Heart left ventricle (tissue), 16 donors: ENCODE measurements at regions of chr12 and their contacts with region 1.

Region 1: DNA sequence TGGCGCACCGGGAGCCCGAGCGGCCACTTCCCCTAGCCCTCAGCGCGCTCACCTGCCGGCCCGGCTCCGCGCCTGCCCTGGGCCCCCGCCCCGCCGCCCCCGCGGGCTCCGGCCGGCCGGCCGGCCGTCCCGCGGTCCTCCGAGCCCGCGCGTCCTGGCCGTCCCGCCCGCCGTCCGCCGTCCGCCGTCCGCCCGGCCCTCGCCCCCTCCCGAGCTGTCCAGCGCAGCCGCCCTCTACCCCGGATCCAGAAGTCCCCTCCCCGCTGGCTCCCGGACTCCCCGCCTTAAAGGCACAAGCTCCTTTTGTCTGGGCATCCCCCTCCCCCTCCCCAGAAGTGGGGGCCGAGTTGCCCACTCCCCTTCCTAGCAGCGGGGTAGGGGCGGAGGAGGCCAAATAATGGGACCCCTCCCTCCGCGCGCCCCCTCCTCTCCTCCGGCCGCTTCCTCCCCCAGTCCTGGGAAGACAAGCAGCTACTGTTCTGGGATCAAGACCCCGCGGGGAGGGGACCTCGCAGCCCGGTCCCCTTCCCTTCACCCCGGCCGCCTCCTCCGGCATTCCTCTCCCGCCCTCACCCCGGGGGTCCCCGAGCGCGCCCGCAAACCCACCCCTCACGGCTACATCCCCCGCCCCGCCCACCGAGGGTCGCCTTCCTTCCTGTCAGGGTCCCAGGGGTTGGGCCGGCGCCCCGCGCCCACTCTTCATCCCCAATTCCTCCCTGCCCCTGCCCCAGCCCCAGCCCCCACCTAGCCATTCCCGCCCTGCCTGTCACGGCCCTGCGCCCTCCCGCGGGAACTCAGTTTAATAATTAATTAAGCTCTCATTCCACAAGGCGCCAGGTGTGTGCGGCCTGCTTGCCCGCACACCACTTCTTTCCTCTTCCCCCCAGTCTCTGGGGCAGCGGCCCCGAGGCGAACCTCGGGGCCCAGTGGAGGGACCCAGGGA is at the start of gene ADCY6:
- DNase-seq: peak; percentile 88 to 92 (median 89)
- ATAC-seq: peak in 3 of 4 donors; percentile 66 to 67 (median 66)
- H3K4me3 ChIP-seq: peak within 1 kb of the TSS; percentile 72 to 100 (median 98)
- H3K27ac ChIP-seq: peak within 1 kb of the TSS; percentile 89 to 99 (median 94)
- H3K4me1 ChIP-seq: peaks cover 3 to 48% (median 34%) of the 10 kb centered on the region in 12 donors
- H3K27me3 ChIP-seq: peaks cover 0 to 14% (median 0%) of the 10 kb centered on the region in 9 donors
- CTCF ChIP-seq: peak in 1 of 12 donors; percentile 8
- POLR2A ChIP-seq: peak in 1 of 2 donors; percentile 46
- total RNA-seq, gene ADCY6: 88.4 to 145 (median 106) TPM

Region 2: DNA sequence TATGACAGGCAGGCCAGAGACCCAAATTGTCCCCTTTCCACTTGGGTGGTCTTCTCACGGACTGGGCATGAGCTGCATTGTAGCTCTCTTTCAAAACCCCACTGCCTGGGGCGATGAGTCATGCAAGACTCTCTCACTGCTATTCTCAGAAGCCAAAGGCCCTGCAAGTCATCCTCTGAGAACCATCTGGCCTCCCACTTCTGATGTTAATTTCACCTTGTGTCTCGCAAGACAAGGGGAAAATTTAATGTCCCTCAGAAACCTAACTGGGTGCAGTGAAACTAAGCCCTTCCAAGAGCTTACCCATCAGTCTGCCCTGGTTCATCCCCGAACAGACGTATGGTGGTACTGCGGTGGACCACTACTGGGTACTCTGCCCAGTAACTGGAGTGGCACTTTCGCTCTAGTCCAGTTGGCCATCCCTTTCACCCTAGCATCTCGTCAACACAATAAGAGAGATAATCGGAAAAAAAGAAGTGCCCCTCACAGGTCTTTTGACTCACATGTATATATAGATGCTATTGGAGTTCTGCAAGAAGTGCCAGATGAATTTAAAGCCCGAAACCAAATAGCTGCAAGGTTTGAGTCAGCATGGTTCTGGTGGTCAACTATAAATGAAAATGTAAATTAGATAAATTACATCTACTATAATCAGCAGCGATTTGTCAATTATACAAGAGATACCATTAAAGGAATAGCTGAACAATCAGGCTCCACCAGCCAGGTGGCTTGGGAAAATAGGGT is 187.9 kb before region 1 on chr12:
- intact Hi-C with region 1: no loop called
- DNase-seq: no peak
- ATAC-seq: no peak
- H3K4me3 ChIP-seq: no peak overlapping the region
- H3K27ac ChIP-seq: no peak overlapping the region
- H3K4me1 ChIP-seq: no peaks in the 10 kb centered on the region
- H3K27me3 ChIP-seq: peaks cover 0 to 5% (median 0%) of the 10 kb centered on the region in 9 donors
- CTCF ChIP-seq: no peak
- POLR2A ChIP-seq: no peak

Region 3: GRCh38 chr12:48681738-48682532 is 107.2 kb before region 1 on chr12 and contains the start of gene KANSL2:
- intact Hi-C with region 1: loop called in 1 of 10 experiments (anchors 5 kb)
- DNase-seq: peak; percentile 98 to 99 (median 99)
- ATAC-seq: peak; percentile 98 to 100 (median 99)
- H3K4me3 ChIP-seq: peak within 1 kb of the TSS; percentile 77 to 99 (median 92)
- H3K27ac ChIP-seq: peak within 1 kb of the TSS; percentile 83 to 99 (median 95)
- H3K4me1 ChIP-seq: peaks cover 6 to 51% (median 42%) of the 10 kb centered on the region in 12 donors
- H3K27me3 ChIP-seq: no peaks in the 10 kb centered on the region
- CTCF ChIP-seq: no peak
- POLR2A ChIP-seq: peak; percentile 93 to 99
- total RNA-seq, gene KANSL2: 20.1 to 34.4 (median 24.0) TPM

Region 4: DNA sequence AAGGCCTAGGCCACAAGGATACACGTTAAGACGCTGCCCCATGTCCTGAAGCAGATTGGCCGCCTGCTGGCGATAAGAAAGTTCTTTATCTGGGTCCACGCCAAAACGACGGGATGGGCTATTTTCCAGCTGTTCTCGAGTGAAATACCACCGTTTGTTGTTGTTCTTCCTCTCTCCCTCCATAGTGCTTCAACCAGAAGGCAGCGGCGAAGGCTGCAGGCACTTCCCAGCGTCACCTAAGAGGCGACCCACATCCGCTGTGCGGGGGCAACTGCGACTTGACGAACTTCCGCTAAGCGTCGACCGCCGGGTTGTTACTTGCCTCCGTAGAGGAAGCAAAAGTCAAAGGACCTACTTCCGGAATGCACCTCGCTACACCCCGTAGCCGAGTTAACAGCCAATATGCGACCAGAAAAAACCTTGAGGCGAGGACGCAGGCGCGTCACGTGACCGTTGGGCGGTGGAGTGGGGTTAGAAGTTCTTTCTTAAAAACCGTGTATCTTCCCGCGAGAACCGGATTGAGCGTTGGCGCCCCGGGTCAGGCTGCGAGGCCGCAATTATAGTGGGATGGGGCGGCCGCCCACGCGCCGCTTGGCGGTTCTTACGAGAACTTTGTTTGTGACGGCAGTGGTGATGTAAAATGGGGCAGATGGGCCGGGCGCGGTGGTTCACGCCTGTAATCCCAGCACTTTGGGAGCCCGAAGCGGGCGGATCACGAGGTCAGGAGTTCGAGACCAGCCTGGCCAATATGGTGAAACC is 72.5 kb before region 1 on chr12 and contains the start of gene CCNT1:
- intact Hi-C with region 1: loop called in 2 of 10 experiments (anchors 2 kb)
- DNase-seq: peak; percentile 99
- ATAC-seq: peak; percentile 98 to 99 (median 98)
- H3K4me3 ChIP-seq: peak within 1 kb of the TSS; percentile 64 to 85 (median 76)
- H3K27ac ChIP-seq: peak within 1 kb of the TSS; percentile 78 to 97 (median 94)
- H3K4me1 ChIP-seq: peaks cover 11 to 36% (median 25%) of the 10 kb centered on the region in 12 donors
- H3K27me3 ChIP-seq: no peaks in the 10 kb centered on the region
- CTCF ChIP-seq: peak in 4 of 12 donors; percentile 13 to 36 (median 22)
- POLR2A ChIP-seq: peak in 1 of 2 donors; percentile 65
- total RNA-seq, gene CCNT1: 11.0 to 29.7 (median 18.1) TPM

Region 5: DNA sequence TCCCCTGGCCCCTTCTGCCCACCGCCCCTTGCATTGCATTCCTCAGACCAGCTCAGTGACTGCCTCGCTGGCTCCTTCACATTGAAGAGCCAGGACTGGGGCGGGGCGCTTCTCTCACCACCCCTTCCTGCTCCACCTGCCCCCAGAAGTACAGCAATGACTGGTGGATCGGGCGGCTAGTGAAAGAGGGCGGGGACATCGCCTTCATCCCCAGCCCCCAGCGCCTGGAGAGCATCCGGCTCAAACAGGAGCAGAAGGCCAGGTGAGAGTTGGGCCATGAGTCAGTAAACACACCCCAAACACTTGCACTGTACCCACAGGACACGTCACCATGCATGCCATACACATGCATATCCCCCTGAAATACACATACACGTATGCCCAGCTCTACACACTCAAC is 35.0 kb after region 1 on chr12:
- intact Hi-C with region 1: no loop called
- DNase-seq: no peak
- ATAC-seq: no peak
- H3K4me3 ChIP-seq: no peak overlapping the region
- H3K27ac ChIP-seq: no peak overlapping the region
- H3K4me1 ChIP-seq: peaks cover 0 to 4% (median 0%) of the 10 kb centered on the region in 12 donors
- H3K27me3 ChIP-seq: no peaks in the 10 kb centered on the region
- CTCF ChIP-seq: no peak
- POLR2A ChIP-seq: no peak